ENCODE measurements at regions of chr2 and their contacts with region 1.

Region 1: DNA sequence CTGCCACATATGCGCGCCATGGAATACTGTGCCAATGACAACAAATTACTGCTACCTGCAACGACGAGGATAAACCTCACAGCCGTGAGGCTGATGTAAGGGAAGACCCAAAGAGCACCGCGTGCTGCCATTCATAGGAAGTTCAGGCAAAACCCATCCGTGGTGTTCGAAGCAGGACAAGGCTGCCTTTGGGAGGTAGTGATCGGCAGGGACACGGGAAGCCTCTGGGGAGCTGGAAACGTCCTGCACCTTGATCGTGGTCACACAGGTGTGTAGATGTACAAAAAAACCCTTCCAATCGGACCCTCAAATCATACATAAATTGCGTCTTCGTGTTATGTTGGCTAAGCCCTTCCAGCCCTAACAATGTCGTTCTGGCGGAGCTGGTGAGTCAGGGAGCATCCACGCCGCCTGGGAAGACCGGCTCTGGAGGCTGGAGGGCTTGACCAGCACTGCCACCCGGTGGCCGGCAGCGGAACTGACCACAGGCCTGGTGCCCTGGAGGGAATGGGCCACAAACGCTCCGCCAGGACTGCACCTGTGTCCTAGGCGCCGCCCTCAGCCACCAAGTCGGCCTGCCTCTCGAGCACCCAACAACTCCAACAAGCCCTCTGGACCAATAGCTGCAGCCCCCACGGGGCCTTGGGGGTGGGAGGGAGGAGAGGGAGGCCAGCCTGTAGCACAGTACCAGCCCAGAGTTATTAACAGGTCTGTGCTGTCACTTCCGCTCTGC is 4.1 kb upstream of the NEURL3 start:
- DNase-seq: peak; percentile 80
- ATAC-seq: peak; percentile 57
- H3K4me3 Mint-ChIP-seq: no peak overlapping the region
- H3K27ac Mint-ChIP-seq: no peak overlapping the region
- H3K4me1 Mint-ChIP-seq: peaks cover 9% of the 10 kb centered on the region
- H3K27me3 Mint-ChIP-seq: peaks cover 16% of the 10 kb centered on the region
- CTCF ChIP-seq: peak; percentile 94

Region 2: DNA sequence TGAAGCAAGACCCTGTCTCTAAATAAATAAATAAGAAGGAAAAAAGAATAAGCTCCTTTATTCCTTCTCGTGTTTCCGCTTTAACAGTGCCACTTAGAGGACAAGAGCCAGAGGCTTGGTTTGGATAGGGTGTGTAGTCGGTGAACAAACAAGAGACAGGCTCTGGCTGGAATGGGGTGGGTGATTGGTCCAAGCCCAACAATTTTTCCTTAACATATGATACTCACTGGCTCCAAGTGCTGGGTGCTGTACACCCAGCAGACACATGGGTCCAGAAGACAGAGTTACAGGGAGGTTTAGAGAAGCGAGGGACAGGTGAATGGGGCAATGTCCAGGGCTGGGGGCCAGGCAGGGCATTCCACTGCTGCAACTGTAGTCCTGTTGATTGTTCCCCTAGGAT is 96.0 kb before region 1 on chr2:
- CTCF ChIA-PET with region 1: interaction called, 133 read pairs
- POLR2A ChIA-PET with region 1: no interaction called
- intact Hi-C with region 1: loop called (anchors 5 kb)
- DNase-seq: no peak
- ATAC-seq: no peak
- H3K4me3 Mint-ChIP-seq: no peak overlapping the region
- H3K27ac Mint-ChIP-seq: no peak overlapping the region
- H3K4me1 Mint-ChIP-seq: peaks cover 8% of the 10 kb centered on the region
- H3K27me3 Mint-ChIP-seq: no peaks in the 10 kb centered on the region
- CTCF ChIP-seq: no peak

Region 3: GRCh38 chr2:96470636-96471035 is 38.6 kb before region 1 on chr2:
- CTCF ChIA-PET with region 1: interaction called, 15 read pairs
- POLR2A ChIA-PET with region 1: no interaction called
- intact Hi-C with region 1: loop called (anchors 5 kb)
- DNase-seq: peak; percentile 72
- ATAC-seq: peak; percentile 88
- H3K4me3 Mint-ChIP-seq: no peak overlapping the region
- H3K27ac Mint-ChIP-seq: no peak overlapping the region
- H3K4me1 Mint-ChIP-seq: peaks cover 8% of the 10 kb centered on the region
- H3K27me3 Mint-ChIP-seq: peaks cover 3% of the 10 kb centered on the region
- CTCF ChIP-seq: peak; percentile 77

Region 4: GRCh38 chr2:96493072-96493471 is 16.2 kb before region 1 on chr2:
- CTCF ChIA-PET with region 1: interaction called, 14 read pairs
- POLR2A ChIA-PET with region 1: interaction called, 5 read pairs
- intact Hi-C with region 1: no loop called
- DNase-seq: no peak
- ATAC-seq: no peak
- H3K4me3 Mint-ChIP-seq: no peak overlapping the region
- H3K27ac Mint-ChIP-seq: peak overlapping the region; percentile 20
- H3K4me1 Mint-ChIP-seq: peaks cover 44% of the 10 kb centered on the region
- H3K27me3 Mint-ChIP-seq: no peaks in the 10 kb centered on the region
- CTCF ChIP-seq: no peak

Region 5: GRCh38 chr2:96527286-96528005 is 18.2 kb after region 1 on chr2:
- CTCF ChIA-PET with region 1: interaction called, 91 read pairs
- POLR2A ChIA-PET with region 1: interaction called, 5 read pairs
- intact Hi-C with region 1: no loop called
- DNase-seq: peak; percentile 87
- ATAC-seq: peak; percentile 25
- H3K4me3 Mint-ChIP-seq: peak overlapping the region; percentile 70
- H3K27ac Mint-ChIP-seq: peak overlapping the region; percentile 90
- H3K4me1 Mint-ChIP-seq: peaks cover 76% of the 10 kb centered on the region
- H3K27me3 Mint-ChIP-seq: no peaks in the 10 kb centered on the region
- CTCF ChIP-seq: peak; percentile 43

Measured in activated CD8-positive, alpha-beta T cell treated with anti-CD3 and anti-CD28 coated beads for 36 hours (primary cell).